GM10248 (cell line): ENCODE measurements at regions of chr19 and their contacts with region 1.

Region 1: GRCh38 chr19:17703824-17704463 is 15.3 kb upstream of the MAP1S start:
- DNase-seq: peak; percentile 84
- CTCF ChIP-seq: peak; percentile 86

Region 2: DNA sequence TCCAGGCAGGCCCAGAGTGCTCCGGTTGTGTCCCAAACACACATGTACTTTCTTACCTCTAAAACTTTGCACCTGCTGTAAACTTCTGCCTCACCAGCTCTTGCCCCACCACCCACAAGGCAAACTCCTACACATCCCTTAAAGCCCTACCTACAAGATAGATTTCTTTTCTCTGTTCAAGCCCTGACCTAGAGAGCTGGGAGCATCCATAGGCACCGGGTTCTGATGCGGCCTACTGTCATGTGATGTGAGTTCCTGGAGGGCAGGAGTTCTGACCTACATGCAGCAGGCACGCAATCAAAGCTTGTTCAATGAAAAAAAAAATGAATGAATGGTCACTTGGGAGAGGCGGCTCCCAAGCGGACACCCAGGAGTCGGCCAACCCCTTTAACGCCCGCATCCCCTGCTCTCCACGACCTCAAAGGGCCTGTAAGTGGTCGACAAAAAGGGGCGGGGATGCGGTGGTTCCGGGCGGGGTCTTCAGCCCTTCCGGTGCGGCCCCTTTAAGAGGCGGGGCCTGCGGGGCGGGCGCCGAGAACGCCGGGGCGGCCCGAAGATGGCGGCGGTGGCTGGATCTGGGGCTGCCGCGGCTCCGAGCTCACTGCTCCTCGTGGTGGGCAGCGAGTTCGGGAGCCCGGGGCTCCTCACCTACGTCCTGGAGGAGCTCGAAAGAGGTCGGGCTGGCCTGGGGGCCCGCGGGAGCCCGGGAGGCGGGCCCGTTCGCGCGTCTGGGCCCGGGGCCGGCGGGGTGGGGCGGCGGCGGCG is 15.2 kb after region 1 on chr19 and contains the start of gene MAP1S:
- CTCF ChIA-PET with region 1: interaction called, 16 read pairs
- POLR2A ChIA-PET with region 1: interaction called, 3 read pairs
- DNase-seq: peak; percentile 92
- CTCF ChIP-seq: no peak

Region 3: DNA sequence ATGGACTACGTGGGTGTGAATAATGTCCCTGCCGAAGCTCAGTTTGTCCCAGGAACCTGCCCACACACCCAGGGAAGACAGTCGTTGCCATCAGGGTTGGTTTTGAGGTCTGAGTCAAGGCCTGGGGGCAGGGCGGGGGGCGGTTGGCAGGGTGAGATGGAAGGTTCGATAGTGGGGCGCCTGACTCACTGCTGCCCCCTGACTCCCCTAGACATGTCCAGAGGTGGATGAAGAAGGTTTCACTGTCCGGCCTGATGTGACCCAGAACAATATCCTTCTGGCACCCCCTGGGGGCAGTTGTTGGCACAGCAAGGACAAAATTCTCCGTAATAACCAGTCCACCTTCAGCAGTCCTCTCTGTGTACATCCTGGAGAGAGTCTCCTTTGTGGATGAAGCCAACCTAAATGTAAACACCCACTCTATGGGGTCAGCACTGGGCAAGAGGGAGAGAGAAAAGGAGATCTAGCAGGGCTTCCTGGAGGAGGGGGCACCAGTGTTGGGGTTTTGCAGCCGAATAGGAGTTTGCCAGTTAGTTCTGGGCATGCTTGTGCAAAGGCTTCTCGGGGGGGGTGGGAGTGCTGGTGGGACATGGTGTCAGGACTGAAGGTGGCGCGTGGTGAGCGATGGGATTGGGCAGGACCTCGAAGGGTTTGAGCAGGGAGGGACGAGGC is 71.4 kb after region 1 on chr19:
- CTCF ChIA-PET with region 1: interaction called, 24 read pairs
- POLR2A ChIA-PET with region 1: no interaction called
- DNase-seq: no peak
- CTCF ChIP-seq: peak; percentile 38

Region 4: GRCh38 chr19:17784201-17785008 is 80.5 kb after region 1 on chr19:
- CTCF ChIA-PET with region 1: interaction called, 29 read pairs
- POLR2A ChIA-PET with region 1: no interaction called
- DNase-seq: peak; percentile 85
- CTCF ChIP-seq: peak; percentile 76

Region 5: DNA sequence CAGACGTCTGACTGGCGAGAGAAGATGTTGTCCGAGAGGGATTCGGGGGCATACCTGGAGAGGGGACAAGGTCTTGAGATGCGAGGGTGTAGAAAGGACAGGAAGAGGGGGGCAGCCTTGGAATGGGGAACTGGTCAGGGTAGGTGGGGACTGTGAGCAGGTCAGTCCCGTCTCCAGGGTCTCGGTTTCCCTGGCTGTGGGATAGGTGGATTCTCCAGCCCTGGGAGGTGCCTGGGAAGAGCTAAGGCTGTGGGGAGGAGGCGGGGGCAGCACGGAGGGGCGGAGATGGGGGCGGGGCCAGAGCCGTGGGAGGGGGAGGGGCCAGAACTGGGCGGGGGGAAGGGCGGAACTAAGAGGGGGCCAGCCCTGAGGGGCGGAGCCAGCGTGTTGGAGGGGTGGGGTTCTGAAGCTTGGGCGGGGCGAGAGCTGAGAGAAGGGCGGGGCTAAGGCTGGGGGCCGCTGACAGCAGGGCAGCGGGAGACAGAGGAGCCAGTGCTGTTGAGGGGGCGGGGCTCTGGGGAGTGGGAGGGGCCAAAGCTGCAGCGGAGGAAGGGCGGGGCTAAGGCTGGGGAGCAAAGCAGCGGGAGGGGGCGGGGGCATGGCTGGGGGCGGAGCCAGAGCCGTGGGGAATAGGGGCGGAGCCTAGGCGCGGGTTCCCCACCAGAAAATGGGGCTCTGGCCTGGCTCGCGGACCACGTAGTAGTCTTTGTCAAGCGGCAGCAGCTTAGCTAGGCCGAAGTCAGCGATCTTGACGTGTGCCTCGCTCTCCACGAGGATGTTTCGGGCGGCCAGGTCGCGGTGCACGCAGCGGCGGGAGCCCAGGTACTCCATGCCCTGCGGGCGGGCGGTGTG is 126.8 kb after region 1 on chr19:
- CTCF ChIA-PET with region 1: no interaction called
- POLR2A ChIA-PET with region 1: no interaction called
- DNase-seq: peak; percentile 64
- CTCF ChIP-seq: no peak